Transverse colon (tissue), 4 donors: ENCODE measurements at regions of chr20 and their contacts with region 1.

Region 1: DNA sequence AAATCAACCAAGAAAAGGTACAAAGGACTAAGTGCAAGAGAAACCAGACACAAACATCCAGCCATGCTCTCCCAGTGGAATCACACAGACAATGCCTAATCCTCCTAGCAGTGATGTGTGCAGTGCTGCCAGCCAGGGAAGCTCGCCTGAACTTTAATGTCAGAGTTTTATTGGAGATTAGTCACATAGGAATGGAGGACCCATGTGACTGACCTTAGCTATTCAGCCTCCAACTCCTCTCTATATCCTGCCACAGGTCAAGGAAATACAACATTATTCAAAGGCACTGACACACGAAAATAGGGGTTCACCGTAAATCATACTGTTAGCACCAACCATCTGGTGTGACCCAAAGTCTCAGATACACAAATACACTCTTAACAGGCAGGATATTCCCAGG is 684.6 kb downstream of the DOK5 start:
- DNase-seq: no peak
- H3K4me3 ChIP-seq: no peak overlapping the region
- H3K27ac ChIP-seq: no peak overlapping the region
- H3K4me1 ChIP-seq: no peaks in the 10 kb centered on the region
- H3K27me3 ChIP-seq: no peaks in the 10 kb centered on the region
- CTCF ChIP-seq: no peak
- EP300 ChIP-seq: no peak
- POLR2A ChIP-seq: no peak

Region 2: GRCh38 chr20:55057779-55058415 is 102.1 kb before region 1 on chr20:
- in situ Hi-C with region 1: loop called in 1 of 4 experiments (anchors 25 kb)
- intact Hi-C with region 1: no loop called
- DNase-seq: peak; percentile 10
- H3K4me3 ChIP-seq: no peak overlapping the region
- H3K27ac ChIP-seq: no peak overlapping the region
- H3K4me1 ChIP-seq: no peaks in the 10 kb centered on the region
- H3K27me3 ChIP-seq: no peaks in the 10 kb centered on the region
- CTCF ChIP-seq: peak in 4 of 5 experiments; percentile 27 to 42 (median 31)
- EP300 ChIP-seq: no peak
- POLR2A ChIP-seq: no peak

Region 3: GRCh38 chr20:55947701-55948100 is 787.7 kb after region 1 on chr20:
- in situ Hi-C with region 1: no loop called
- intact Hi-C with region 1: no loop called
- DNase-seq: no peak
- H3K4me3 ChIP-seq: no peak overlapping the region
- H3K27ac ChIP-seq: no peak overlapping the region
- H3K4me1 ChIP-seq: no peaks in the 10 kb centered on the region
- H3K27me3 ChIP-seq: no peaks in the 10 kb centered on the region
- CTCF ChIP-seq: no peak
- EP300 ChIP-seq: no peak
- POLR2A ChIP-seq: no peak